Adrenal gland (tissue), 19 donors: ENCODE measurements at regions of chr4 and their contacts with region 1.

Region 1: DNA sequence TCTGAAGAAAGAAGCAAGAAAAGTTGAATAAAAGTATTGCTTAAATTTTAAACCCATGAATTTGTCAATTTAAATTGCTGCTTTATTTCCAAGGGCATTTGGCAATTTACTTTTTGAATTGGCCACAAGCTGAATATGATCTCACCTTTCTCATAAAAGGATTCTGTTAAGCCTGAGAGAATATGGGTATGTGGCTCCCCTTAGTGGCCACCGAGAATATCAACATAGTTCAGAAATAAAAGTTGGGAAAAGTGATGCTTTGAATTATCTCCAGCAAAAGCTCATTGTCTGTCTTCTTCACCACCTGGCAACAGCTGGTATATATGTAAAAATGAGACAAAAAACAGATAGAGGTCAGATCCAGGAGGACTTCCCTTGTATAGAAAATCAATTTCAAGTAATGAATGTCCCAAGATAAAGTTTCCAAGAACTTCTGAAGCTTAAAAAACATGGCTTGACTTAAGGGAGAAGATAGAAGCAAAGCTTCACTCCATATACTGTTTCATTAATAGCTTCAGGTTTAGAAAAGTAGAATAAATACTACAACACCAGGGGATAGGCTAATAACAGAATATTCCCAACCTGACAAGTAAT is 290.7 kb upstream of the FAM241A start:
- DNase-seq: peak; percentile 15 to 55 (median 32)
- H3K4me3 ChIP-seq: no peak overlapping the region
- H3K27ac ChIP-seq: no peak overlapping the region
- H3K4me1 ChIP-seq: no peaks in the 10 kb centered on the region
- H3K27me3 ChIP-seq: no peaks in the 10 kb centered on the region
- CTCF ChIP-seq: peak; percentile 40 to 70 (median 61)
- POLR2A ChIP-seq: no peak

Region 2: DNA sequence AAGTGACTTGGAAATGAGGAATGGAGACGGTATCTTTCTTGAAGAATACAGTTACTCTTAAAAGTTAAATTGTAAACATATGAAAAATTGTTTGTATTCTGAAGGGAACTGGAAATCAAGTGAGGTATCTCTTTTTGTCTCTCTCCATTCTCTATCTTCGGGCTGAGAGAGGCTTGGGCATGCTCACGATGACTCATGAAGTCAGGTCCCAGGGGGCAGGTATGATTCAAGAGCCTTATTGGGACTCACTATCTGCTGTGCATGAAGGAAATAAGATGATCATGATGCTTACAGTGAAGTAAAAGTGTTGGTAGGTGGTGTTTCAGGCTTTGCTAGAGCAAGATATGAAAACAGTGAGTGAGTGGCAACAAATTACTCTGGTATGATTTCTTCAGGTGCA is 1031.3 kb before region 1 on chr4:
- intact Hi-C with region 1: no loop called
- DNase-seq: no peak
- H3K4me3 ChIP-seq: no peak overlapping the region
- H3K27ac ChIP-seq: no peak overlapping the region
- H3K4me1 ChIP-seq: no peaks in the 10 kb centered on the region
- H3K27me3 ChIP-seq: no peaks in the 10 kb centered on the region
- CTCF ChIP-seq: no peak
- POLR2A ChIP-seq: no peak

Region 3: DNA sequence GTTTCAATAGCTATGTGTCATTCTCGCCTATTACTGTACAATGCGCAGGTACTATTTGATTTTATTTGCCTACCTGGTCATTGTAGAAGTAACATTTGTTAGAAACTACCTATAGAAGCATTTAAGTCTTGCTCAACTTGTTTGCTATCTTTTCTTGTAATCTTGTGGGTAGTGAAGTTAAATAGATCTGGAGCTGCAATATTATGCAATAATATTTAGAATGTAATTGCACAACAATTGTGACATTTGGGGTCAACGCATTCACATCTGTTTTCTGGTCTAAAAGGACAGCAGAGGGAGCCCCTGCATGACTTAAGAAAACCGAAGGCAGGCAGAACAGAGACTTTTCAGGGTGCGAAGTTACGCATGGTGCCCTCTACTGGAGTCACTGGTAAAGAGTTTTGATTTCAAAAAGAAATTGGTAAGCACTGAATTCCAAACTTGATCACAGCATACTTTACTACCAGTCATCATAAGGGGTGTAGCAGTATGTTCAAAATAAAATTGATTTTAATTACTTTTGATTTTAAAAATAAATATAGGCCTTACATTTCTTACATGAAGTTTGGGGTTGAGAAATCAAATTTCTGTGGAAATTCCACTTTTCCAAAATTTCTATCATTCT is 212.5 kb before region 1 on chr4:
- intact Hi-C with region 1: loop called in 1 of 2 experiments (anchors 5 kb)
- DNase-seq: peak; percentile 64 to 85 (median 77)
- H3K4me3 ChIP-seq: no peak overlapping the region
- H3K27ac ChIP-seq: no peak overlapping the region
- H3K4me1 ChIP-seq: no peaks in the 10 kb centered on the region
- H3K27me3 ChIP-seq: no peaks in the 10 kb centered on the region
- CTCF ChIP-seq: peak; percentile 51 to 84 (median 79)
- POLR2A ChIP-seq: no peak

Region 4: GRCh38 chr4:112007391-112007790 is 152.8 kb after region 1 on chr4:
- intact Hi-C with region 1: no loop called
- DNase-seq: no peak
- H3K4me3 ChIP-seq: no peak overlapping the region
- H3K27ac ChIP-seq: no peak overlapping the region
- H3K4me1 ChIP-seq: no peaks in the 10 kb centered on the region
- H3K27me3 ChIP-seq: no peaks in the 10 kb centered on the region
- CTCF ChIP-seq: no peak
- POLR2A ChIP-seq: no peak